Activated CD4-positive, alpha-beta T cell treated with anti-CD3 and anti-CD28 coated beads for 36 hours (primary cell): ENCODE measurements at regions of chr20 and their contacts with region 1.

Region 1: DNA sequence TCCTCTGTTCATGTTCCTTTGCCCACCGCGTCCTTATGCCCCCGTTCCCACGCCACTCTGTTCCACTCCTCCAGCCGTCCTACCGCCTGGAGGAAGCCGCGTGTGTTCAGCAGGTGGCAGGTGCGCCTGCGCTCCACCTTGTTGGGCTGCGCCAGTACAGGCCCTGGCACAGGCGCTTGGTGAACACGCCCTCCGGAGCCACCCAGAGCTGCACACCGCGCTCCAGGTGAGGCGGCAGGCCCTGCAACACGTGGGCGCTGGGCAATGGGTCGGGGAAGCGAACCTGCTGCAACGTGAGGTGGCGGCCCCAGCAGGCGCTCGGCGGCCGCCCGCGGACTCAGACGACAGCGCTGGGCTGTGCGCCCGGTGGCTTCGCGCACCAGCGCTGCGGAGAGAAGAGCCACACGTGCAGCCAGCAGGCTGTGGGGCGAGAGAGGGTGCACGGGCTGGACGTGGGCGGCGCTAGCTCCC is 4.1 kb upstream of the FOXS1 start:
- DNase-seq: no peak
- ATAC-seq: no peak
- H3K4me3 Mint-ChIP-seq: no peak overlapping the region
- H3K27ac Mint-ChIP-seq: no peak overlapping the region
- H3K4me1 Mint-ChIP-seq: no peaks in the 10 kb centered on the region
- H3K27me3 Mint-ChIP-seq: peaks cover 15% of the 10 kb centered on the region

Region 2: DNA sequence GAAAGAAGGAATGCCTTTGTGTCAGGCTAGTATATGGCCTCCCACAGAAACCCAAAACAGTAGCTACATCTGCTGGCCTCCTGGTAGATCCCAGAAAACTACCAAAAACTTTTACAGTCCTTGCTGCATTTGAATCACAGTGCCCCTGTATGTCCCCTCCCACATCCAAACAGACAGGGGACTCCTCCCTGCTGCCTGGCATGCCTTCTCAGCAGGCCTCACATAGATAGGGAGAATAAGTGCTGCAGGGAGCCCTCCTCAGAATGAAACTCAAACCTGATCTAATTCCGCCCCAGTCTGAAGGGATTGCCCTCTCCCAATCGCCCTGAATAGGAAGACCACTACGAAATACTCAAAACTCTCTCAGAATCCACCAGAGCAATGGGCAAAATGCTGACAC is 527.0 kb before region 1 on chr20:
- CTCF ChIA-PET with region 1: no interaction called
- POLR2A ChIA-PET with region 1: no interaction called
- intact Hi-C with region 1: no loop called
- DNase-seq: no peak
- ATAC-seq: no peak
- H3K4me3 Mint-ChIP-seq: no peak overlapping the region
- H3K27ac Mint-ChIP-seq: no peak overlapping the region
- H3K4me1 Mint-ChIP-seq: no peaks in the 10 kb centered on the region
- H3K27me3 Mint-ChIP-seq: peaks cover 5% of the 10 kb centered on the region

Region 3: DNA sequence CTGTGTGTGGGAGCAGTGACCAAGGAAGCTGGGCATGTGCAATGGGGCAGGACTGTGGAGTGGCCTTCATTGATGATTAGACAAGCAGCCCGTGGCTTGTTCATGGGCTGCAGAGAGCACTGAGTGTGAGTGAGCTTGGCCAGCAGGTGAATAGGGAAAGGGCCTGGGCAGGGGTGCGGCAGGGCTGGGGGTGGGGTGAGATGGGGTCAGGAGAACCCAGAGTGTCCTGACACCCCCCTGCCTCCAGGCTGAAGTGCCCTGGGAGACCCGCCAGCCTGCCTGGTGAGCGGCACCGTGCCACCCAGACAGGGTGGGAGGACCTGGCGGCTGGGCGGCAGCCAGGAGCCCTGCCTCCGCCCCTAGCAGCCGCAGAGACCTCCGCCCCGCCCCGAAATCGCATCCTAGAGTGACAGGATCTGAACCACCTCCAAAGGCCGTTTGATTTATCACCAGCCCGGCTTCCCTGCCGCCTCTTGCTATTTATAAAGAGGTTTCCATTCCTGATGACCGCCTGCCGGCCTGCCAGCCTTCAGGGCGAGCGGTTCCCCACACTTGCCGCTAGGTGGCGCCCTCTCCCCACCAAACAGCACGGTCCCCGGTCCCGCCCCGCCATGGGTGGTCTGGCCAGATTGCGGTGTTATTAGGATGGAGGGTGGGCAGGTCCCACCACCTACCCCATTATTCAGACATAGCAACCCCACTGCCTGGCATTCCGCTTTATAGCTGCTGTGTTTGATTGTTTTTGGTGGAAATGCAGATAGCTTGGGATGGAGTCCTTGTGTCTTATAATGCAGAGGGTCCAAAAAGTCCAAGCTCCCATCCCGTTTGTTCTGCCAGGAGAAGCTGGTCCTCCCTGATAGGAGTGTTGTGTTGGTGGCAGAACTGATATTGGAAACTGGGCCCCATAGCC is 26.8 kb before region 1 on chr20:
- CTCF ChIA-PET with region 1: interaction called, 19 read pairs
- POLR2A ChIA-PET with region 1: no interaction called
- intact Hi-C with region 1: loop called (anchors 1 to 2 kb)
- DNase-seq: peak; percentile 86
- ATAC-seq: peak; percentile 90
- H3K4me3 Mint-ChIP-seq: no peak overlapping the region
- H3K27ac Mint-ChIP-seq: no peak overlapping the region
- H3K4me1 Mint-ChIP-seq: peaks cover 4% of the 10 kb centered on the region
- H3K27me3 Mint-ChIP-seq: no peaks in the 10 kb centered on the region

Region 4: GRCh38 chr20:31861346-31862156 is 12.1 kb after region 1 on chr20:
- CTCF ChIA-PET with region 1: interaction called, 25 read pairs
- POLR2A ChIA-PET with region 1: no interaction called
- intact Hi-C with region 1: no loop called
- DNase-seq: peak; percentile 84
- ATAC-seq: peak; percentile 97
- H3K4me3 Mint-ChIP-seq: peak overlapping the region; percentile 24
- H3K27ac Mint-ChIP-seq: no peak overlapping the region
- H3K4me1 Mint-ChIP-seq: peaks cover 8% of the 10 kb centered on the region
- H3K27me3 Mint-ChIP-seq: peaks cover 26% of the 10 kb centered on the region

Region 5: DNA sequence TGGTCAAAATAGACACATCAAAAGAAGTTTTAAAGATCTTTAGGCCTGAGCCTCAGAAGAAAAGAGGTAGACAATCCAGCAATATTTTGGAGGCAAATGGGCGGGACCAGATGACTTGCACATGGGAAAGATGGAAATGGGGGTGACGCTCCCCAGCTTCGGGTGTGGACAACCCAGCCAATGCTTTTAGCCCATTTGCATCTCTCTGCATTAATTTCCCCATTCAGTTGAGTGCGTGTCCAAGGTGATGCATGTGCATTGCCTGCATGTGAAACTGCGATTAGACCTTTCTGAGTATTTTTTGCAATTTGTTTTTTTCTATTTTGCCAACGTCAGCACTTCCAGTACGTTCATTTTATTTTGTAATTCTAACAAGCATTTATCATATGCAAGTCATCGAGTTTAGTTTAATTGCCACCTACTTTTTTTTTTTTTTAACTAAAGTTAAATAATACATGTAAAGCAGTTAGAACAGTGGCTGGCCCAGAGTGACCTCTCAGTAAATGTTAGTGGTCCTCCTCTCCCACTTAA is 78.2 kb after region 1 on chr20:
- CTCF ChIA-PET with region 1: no interaction called
- POLR2A ChIA-PET with region 1: no interaction called
- intact Hi-C with region 1: no loop called
- DNase-seq: no peak
- ATAC-seq: no peak
- H3K4me3 Mint-ChIP-seq: no peak overlapping the region
- H3K27ac Mint-ChIP-seq: no peak overlapping the region
- H3K4me1 Mint-ChIP-seq: no peaks in the 10 kb centered on the region
- H3K27me3 Mint-ChIP-seq: peaks cover 14% of the 10 kb centered on the region

Region 6: GRCh38 chr20:32018269-32019074 is 169.0 kb after region 1 on chr20:
- CTCF ChIA-PET with region 1: no interaction called
- POLR2A ChIA-PET with region 1: no interaction called
- intact Hi-C with region 1: no loop called
- DNase-seq: peak; percentile 64
- ATAC-seq: peak; percentile 52
- H3K4me3 Mint-ChIP-seq: peak overlapping the region; percentile 60
- H3K27ac Mint-ChIP-seq: no peak overlapping the region
- H3K4me1 Mint-ChIP-seq: peaks cover 21% of the 10 kb centered on the region
- H3K27me3 Mint-ChIP-seq: peaks cover 55% of the 10 kb centered on the region

Region 7: GRCh38 chr20:32031007-32031958 is 181.8 kb after region 1 on chr20:
- CTCF ChIA-PET with region 1: interaction called, 18 read pairs
- POLR2A ChIA-PET with region 1: no interaction called
- intact Hi-C with region 1: loop called (anchors 1 to 5 kb)
- DNase-seq: peak; percentile 75
- ATAC-seq: peak; percentile 79
- H3K4me3 Mint-ChIP-seq: no peak overlapping the region
- H3K27ac Mint-ChIP-seq: no peak overlapping the region
- H3K4me1 Mint-ChIP-seq: no peaks in the 10 kb centered on the region
- H3K27me3 Mint-ChIP-seq: peaks cover 23% of the 10 kb centered on the region